ENCODE measurements at regions of chr3 and their contacts with region 1.

Region 1: DNA sequence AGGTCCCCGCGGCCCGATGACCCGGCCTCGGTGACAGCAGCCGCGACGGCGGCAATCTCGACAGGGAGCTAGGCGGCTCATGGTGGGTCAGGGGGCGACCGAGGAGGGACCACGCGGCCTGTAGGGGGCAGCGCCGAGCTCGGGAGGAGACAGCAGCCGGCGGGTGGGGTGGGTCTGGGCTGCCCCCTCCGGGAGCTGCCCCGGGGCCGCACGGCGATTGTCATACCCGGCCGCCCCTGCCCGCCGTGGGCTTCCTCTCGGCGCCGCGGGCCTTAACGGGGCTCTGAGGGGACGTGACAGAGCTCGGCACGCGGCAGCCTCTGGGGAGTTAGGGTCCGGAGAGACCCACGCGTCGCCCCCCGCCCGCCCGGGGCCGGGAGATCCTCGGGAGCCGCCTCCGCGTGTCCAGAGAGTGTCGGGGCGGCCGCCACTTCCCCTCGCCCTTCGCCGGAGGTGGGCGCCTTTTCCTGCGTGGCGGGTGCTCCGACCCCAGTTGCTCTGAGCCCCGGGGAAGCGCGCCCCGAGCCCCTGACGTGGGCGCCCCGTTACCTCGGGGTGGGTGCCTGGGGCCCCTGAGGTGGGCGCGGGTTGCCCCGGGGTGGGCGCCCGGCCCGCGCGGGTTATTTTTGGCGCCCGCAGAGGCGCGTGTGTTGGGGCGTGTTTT is 539 bp upstream of the PLCL2 start:
- DNase-seq: peak; percentile 87
- ATAC-seq: peak; percentile 61
- H3K4me3 Mint-ChIP-seq: peak overlapping the region; percentile 93
- H3K27ac Mint-ChIP-seq: peak overlapping the region; percentile 94
- H3K4me1 Mint-ChIP-seq: peaks cover 20% of the 10 kb centered on the region
- H3K27me3 Mint-ChIP-seq: no peaks in the 10 kb centered on the region

Region 2: DNA sequence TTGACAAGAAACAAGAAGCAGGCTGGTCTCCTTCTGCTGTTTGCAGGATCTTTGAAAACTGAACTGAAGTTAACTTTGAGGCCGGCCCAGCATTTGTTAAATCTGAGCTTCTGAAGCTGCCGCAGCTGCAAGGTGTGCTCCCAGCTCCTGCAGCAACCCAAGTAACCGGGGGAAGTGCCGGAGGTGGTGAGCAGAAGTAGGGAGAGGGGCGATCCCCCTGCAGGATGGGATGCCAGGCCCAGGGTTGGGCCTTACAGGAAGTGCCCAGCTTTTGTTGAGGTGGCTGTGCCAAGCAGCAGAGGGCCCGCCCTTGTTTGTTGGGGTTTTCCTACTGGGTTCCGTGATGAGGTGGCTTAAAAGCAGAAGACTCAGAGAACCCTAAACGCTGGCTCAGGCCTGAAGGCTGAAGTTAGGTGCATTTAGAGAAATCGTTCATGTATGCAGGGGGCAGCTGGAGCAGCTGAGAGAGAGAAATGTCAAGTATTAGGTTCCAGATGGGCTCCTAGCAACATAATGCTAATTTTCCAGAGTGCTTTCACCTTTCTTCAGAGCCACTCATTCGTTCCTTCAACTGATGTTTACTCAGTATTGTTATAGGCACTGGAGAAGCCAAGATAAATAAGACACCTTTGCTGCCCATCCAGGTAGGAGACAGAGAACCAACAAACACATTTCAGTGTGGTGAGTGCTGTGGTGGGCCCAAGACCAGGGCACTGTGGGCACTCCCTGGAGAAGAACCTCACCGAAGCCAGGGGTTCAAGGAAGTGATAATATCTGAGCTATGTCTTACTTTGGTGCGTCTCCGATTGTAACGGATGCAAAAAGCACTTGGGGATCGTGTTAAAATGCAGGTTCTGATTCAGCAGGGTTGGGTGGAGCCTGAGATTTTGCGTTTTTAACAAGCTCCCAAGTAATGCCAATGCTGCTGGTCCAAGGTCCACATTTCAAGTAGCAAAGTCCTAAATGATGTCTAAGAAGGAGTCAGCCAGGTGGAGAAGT is 41.6 kb before region 1 on chr3:
- CTCF ChIA-PET with region 1: interaction called, 6 read pairs
- POLR2A ChIA-PET with region 1: no interaction called
- intact Hi-C with region 1: loop called (anchors 1 kb)
- DNase-seq: peak; percentile 87
- ATAC-seq: peak; percentile 96
- H3K4me3 Mint-ChIP-seq: peak overlapping the region; percentile 69
- H3K27ac Mint-ChIP-seq: peak overlapping the region; percentile 95
- H3K4me1 Mint-ChIP-seq: peaks cover 75% of the 10 kb centered on the region
- H3K27me3 Mint-ChIP-seq: no peaks in the 10 kb centered on the region

Region 3: DNA sequence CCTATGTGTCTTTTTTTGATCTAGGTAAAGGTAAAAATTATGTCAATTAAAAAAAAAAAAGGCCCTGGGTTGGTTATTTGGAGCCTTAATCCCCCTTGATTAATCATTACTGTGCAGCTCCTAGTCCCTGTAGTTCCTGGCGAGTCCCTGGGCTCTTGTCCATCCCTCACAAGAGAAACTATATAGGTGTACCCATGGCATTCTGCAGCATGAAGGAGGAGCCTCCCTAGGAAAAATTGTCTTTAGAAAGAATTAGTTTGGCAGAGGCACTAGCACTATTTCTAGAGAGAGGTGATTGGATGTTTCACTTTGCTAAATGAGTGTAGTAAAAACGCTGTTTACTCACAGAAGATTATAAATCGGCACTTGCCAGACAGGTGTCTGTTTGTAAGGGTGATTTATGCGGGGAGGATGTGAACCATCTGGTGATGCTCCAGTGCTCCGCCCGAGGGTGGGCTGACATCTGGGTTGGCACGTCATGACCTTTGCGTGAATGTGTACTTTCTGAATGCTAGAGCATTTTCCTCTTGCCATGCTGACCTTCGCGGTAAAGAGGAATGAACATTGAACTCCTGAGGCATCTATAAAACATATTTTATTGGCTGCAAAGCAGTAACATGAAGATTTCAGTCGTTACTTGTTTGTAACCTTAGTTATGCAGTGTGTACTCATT is 13.2 kb after region 1 on chr3:
- CTCF ChIA-PET with region 1: interaction called, 13 read pairs
- POLR2A ChIA-PET with region 1: interaction called, 3 read pairs
- intact Hi-C with region 1: no loop called
- DNase-seq: peak; percentile 69
- ATAC-seq: peak; percentile 76
- H3K4me3 Mint-ChIP-seq: peak overlapping the region; percentile 45
- H3K27ac Mint-ChIP-seq: peak overlapping the region; percentile 66
- H3K4me1 Mint-ChIP-seq: peaks cover 81% of the 10 kb centered on the region
- H3K27me3 Mint-ChIP-seq: no peaks in the 10 kb centered on the region

Region 4: GRCh38 chr3:17023006-17023664 is 138.9 kb after region 1 on chr3:
- CTCF ChIA-PET with region 1: interaction called, 10 read pairs
- POLR2A ChIA-PET with region 1: no interaction called
- intact Hi-C with region 1: loop called (anchors 1 to 2 kb)
- DNase-seq: peak; percentile 70
- ATAC-seq: peak; percentile 94
- H3K4me3 Mint-ChIP-seq: peak overlapping the region; percentile 59
- H3K27ac Mint-ChIP-seq: peak overlapping the region; percentile 88
- H3K4me1 Mint-ChIP-seq: peaks cover 71% of the 10 kb centered on the region
- H3K27me3 Mint-ChIP-seq: no peaks in the 10 kb centered on the region

Region 5: GRCh38 chr3:17183951-17184550 is 299.8 kb after region 1 on chr3:
- CTCF ChIA-PET with region 1: no interaction called
- POLR2A ChIA-PET with region 1: no interaction called
- intact Hi-C with region 1: no loop called
- DNase-seq: no peak
- ATAC-seq: peak; percentile 95
- H3K4me3 Mint-ChIP-seq: no peak overlapping the region
- H3K27ac Mint-ChIP-seq: no peak overlapping the region
- H3K4me1 Mint-ChIP-seq: peaks cover 25% of the 10 kb centered on the region
- H3K27me3 Mint-ChIP-seq: no peaks in the 10 kb centered on the region

Region 6: GRCh38 chr3:17233398-17233800 is 349.2 kb after region 1 on chr3:
- CTCF ChIA-PET with region 1: interaction called, 3 read pairs
- POLR2A ChIA-PET with region 1: no interaction called
- intact Hi-C with region 1: loop called (anchors 1 to 2 kb)
- DNase-seq: peak; percentile 47
- ATAC-seq: peak; percentile 91
- H3K4me3 Mint-ChIP-seq: no peak overlapping the region
- H3K27ac Mint-ChIP-seq: no peak overlapping the region
- H3K4me1 Mint-ChIP-seq: peaks cover 24% of the 10 kb centered on the region
- H3K27me3 Mint-ChIP-seq: no peaks in the 10 kb centered on the region

Measured in activated CD4-positive, alpha-beta T cell treated with anti-CD3 and anti-CD28 coated beads for 36 hours (primary cell).